ENCODE measurements at regions of chr15 and their contacts with region 1.

Region 1: DNA sequence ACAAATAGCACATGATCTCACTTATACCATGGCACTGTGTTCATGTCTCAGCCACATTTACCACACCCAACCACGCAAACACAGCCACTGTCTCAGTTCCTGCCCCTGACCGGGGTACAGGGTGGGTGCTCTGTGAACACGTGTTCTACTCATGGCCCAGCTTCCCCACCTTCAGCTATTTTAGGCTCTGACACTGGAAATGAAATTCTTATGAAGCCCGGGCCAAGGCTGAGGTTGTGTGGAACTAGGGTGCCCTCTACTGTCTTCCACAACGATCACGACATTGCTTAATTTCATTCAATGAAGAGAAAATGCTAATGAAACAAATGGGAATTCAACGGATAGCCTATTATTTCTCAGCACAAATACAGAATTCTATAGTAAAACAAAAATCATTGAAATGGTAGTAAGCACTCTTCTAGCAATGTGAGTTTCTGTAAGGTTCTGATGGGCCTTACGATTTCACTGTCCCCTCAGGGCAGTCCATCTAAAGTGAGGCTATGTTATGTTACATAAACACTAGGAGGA is 2.1 kb upstream of the GABRA5 start:
- DNase-seq: no peak

Region 2: GRCh38 chr15:25508369-25509002 is 1356.2 kb before region 1 on chr15:
- intact Hi-C with region 1: loop called (anchors 5 kb)
- DNase-seq: no peak

Region 3: GRCh38 chr15:25693321-25694237 is 1171.1 kb before region 1 on chr15:
- intact Hi-C with region 1: loop called (anchors 5 kb)
- DNase-seq: peak; percentile 72

Region 4: DNA sequence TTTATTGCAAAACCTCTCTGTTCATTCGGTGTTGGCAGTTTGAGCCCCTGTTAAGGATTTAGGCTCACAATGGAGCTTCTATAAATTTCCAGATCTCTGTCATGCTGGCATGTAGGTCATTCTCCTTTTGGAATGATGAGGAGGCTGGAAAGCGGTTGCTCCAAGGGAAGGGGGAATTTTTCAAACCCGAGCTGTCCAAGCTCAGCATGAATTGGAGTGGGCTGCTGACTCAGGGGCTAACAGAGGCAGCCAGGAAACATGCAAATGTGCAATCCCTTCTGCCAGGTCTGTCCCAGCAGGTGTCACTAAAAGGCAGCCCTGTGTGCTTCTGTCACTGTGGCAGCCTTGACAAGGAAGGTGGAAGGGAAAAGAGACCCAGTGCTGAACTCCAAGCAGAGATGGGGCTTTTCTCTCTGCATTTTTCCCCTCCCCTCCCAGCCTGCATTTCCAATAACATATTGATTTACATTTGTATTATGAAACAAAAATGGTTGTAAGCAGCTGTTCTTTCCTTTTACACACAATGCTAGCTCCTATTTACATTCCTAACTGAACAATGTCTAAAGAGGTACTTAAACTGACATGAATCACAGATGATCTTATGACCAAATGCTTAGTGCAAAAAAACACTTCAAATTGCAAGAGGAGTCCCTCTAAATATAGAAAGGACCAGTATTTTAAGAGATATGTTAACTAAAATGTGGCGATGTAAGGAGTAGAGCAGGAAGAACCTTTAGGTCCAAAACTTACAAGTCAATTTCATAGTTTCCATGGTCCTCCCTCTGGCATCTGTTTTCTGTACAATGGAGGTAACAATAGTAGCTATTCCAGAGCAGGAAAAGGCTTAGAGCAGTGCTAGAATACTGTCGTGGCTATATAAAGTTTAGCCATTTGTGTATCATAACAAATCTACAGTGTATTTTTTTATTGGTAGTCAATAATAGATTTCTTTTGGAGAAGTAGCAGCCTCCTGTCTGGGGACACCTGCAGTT is 917.1 kb before region 1 on chr15:
- intact Hi-C with region 1: loop called (anchors 10 kb)
- DNase-seq: no peak

Region 5: DNA sequence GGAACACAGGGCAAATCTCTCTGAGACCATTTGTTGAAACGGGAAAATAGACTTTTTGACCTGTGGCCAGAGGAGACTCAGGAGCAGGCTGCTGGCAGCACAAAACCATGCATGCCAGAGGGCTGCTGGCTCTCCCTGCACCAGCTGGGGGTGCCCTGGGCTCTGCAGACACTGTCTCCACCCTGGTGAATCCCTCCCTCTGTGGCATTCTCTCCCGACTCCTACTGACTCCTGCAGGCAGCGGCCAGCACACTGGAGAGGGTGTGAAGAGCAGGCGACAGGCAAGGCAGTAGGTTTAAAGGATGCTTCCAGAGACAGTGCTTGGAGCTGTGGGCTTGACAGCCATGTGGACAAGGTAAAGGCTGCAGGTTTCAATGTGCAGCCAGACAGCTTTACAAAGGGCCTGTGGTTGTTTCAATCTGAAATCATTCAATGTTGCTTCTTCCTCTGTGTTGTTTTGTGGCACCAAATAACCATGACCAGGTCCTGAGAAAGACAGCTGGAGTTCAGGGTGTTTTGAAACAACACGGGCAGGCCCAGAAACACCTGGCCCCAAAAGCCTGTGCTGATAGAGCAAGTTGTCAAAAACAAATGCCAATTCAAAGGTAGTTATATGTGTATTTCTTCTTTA is 570.6 kb before region 1 on chr15:
- intact Hi-C with region 1: loop called (anchors 5 kb)
- DNase-seq: no peak

Region 6: GRCh38 chr15:26945046-26945445 is 80.3 kb after region 1 on chr15:
- intact Hi-C with region 1: no loop called
- DNase-seq: no peak

Measured in cardiac septum (tissue), 1 donor.